AG04450 (cell line): ENCODE measurements at regions of chr1 and their contacts with region 1.

Region 1: DNA sequence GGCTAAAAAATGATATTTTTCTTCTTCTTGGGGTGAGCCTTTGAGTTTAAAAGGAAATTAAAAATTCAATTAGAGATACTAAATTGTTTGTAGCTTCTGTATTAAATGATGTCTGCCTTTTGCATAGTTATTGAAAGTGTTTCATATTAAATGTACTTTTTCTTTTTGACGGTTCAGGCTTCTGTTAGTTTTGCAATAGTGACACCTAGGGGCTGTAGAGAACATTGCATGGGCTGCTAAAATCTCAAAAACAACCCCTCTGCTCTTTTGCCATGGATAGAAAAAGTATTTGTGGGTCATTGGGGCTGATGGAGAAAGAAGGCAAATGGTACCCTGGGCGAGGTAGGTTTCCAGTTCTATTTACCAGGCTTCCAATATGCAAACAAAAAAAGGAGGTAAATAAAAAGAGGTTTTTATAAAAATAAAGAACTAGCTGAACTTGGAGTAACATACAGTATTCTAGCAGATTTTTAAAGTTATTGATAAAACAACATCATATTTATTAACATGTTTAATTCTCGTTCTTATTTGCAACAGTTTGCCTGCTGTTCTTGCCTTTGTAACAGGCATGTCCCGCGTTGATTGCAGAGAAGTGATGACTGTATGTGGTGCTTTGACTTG is 115.4 kb upstream of the HOOK1 start:
- DNase-seq: no peak
- H3K4me3 ChIP-seq: no peak overlapping the region
- H3K27ac ChIP-seq: no peak overlapping the region
- H3K27me3 ChIP-seq: no peaks in the 10 kb centered on the region
- CTCF ChIP-seq: peak; percentile 97

Region 2: DNA sequence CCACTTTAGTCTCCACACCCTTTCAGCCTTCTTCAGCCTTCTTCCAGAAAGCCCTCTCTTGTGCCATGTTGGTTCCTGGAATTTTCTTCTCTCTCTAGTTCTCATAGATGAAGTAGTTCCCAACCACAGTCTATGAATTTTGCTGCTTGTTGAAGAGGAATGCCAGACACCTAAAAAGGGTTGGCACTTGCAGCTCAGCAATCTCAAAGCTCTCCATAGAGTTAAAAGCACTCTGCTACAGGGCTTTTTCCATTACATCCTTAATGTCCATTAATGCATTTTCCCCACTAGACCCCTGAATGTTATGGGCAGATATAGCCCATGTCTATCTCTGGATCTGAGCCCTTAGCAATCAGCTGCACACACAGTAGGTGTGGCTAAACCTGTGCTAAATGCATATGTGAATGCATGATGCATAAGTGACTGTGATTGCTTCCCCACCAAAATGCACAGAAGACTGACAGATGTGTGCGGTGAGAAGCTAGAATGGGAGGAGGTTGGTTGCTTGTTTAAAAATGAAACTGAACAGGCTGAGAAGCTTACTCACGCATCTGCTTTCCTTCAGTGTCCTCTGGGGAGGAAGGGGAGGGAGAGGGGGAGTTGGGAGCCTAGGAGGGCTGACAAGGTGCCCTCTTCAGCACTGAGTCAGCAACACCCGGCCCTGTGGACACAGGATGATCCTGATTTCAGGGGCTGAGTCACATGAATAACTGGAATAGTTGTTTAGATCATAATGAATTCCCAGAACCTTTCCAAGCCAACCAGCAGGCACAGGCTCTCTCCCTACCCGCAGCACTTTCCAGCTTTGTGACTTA is 548.6 kb before region 1 on chr1:
- CTCF ChIA-PET with region 1: interaction called, 13 read pairs
- POLR2A ChIA-PET with region 1: interaction called, 3 read pairs
- DNase-seq: peak; percentile 99
- H3K4me3 ChIP-seq: peak overlapping the region; percentile 35
- H3K27ac ChIP-seq: peak overlapping the region; percentile 97
- H3K27me3 ChIP-seq: no peaks in the 10 kb centered on the region
- CTCF ChIP-seq: peak; percentile 2; the same call in 1 of the 2 replicates

Region 3: DNA sequence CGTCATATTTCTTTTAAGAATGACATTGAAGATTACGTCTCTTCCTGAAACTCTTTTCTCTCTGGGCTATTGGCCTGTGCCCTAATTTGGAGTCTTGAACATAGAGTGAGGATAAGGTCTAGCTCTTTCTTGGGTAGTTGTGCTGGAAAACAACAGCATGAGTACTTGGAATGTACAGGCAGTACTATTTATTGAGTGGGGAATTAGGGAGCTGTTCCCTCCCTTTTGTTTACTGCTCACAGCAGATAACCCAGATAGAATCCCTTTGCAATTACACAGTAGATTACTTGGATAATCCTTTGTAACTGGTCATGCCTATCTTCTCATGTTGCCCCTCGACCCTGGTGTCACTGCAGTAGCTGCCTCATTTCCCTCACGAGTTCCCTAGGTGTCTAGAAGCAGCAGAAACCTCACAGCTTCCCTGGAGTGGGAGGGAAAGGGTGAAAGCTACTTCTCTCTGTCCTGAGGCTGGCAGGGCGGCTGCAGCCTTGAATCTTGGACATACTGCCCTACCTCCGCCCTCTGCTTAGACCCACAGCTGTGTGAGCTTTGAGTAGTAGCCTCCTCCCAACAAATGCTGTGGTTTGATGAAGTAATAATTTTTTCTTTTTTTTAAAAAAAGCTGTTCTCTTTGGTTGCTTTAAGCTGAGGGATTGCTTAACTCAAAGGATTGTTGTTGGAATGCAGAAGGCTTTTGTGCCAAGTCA is 331.9 kb before region 1 on chr1:
- CTCF ChIA-PET with region 1: interaction called, 14 read pairs
- POLR2A ChIA-PET with region 1: interaction called, 5 read pairs
- DNase-seq: peak; percentile 82
- H3K4me3 ChIP-seq: no peak overlapping the region; the same call in 1 of the 2 replicates
- H3K27ac ChIP-seq: peak overlapping the region; percentile 91
- H3K27me3 ChIP-seq: no peaks in the 10 kb centered on the region
- CTCF ChIP-seq: no peak

Region 4: GRCh38 chr1:59601041-59601441 is 98.3 kb before region 1 on chr1:
- CTCF ChIA-PET with region 1: interaction called, 14 read pairs
- POLR2A ChIA-PET with region 1: interaction called, 8 read pairs
- DNase-seq: no peak
- H3K4me3 ChIP-seq: no peak overlapping the region
- H3K27ac ChIP-seq: no peak overlapping the region
- H3K27me3 ChIP-seq: no peaks in the 10 kb centered on the region
- CTCF ChIP-seq: no peak

Region 5: GRCh38 chr1:59759156-59759925 is 60.0 kb after region 1 on chr1:
- CTCF ChIA-PET with region 1: interaction called, 44 read pairs
- POLR2A ChIA-PET with region 1: interaction called, 5 read pairs
- DNase-seq: peak; percentile 77
- H3K4me3 ChIP-seq: no peak overlapping the region
- H3K27ac ChIP-seq: no peak overlapping the region
- H3K27me3 ChIP-seq: no peaks in the 10 kb centered on the region
- CTCF ChIP-seq: peak; percentile 98